ENCODE measurements at regions of chr10 and their contacts with region 1.

Region 1: GRCh38 chr10:96695366-96695765 is 24.9 kb downstream of the PIK3AP1 start:
- DNase-seq: no peak
- H3K4me3 Mint-ChIP-seq: peak overlapping the region; percentile 57
- H3K27ac Mint-ChIP-seq: peak overlapping the region; percentile 83
- H3K4me1 Mint-ChIP-seq: peaks cover 46% of the 10 kb centered on the region
- H3K27me3 Mint-ChIP-seq: no peaks in the 10 kb centered on the region

Region 2: GRCh38 chr10:96440361-96441292 is 254.7 kb before region 1 on chr10:
- intact Hi-C with region 1: no loop called
- DNase-seq: no peak
- H3K4me3 Mint-ChIP-seq: no peak overlapping the region
- H3K27ac Mint-ChIP-seq: no peak overlapping the region
- H3K4me1 Mint-ChIP-seq: no peaks in the 10 kb centered on the region
- H3K27me3 Mint-ChIP-seq: peaks cover 5% of the 10 kb centered on the region

Region 3: GRCh38 chr10:96651998-96652431 is 43.4 kb before region 1 on chr10:
- intact Hi-C with region 1: loop called (anchors 1 kb)
- DNase-seq: no peak
- H3K4me3 Mint-ChIP-seq: peak overlapping the region; percentile 1
- H3K27ac Mint-ChIP-seq: peak overlapping the region; percentile 67
- H3K4me1 Mint-ChIP-seq: peaks cover 48% of the 10 kb centered on the region
- H3K27me3 Mint-ChIP-seq: no peaks in the 10 kb centered on the region

Region 4: DNA sequence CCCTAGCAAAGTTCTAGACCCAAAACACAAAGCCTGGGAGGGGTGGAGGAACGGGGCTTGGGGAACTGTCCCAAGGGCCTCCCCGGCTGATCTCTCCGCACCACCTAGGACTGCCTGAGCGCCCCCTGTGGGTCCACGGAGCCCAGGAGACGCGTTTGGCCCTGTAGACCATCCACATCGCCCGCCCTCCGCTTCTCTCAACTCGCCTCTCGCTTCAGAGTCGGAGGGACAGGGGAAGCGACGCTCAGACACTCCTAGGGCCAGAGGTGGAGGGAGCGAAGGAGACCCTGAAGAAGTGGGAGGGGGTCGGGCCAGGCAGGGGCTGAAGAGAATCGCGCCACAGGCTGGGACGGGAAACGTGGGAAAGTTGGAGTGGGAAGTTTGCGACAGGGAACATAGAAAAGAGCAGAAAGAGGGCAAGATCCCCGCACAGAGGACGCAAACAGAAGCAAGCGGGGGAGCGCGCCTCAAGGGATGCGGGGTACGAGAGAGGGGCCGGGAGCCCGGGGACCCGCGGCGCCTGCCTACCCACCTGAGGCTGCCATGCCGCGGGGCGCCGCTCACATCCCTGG is 24.6 kb after region 1 on chr10:
- intact Hi-C with region 1: loop called (anchors 2 kb)
- DNase-seq: peak; percentile 13
- H3K4me3 Mint-ChIP-seq: peak overlapping the region; percentile 91
- H3K27ac Mint-ChIP-seq: peak overlapping the region; percentile 74
- H3K4me1 Mint-ChIP-seq: peaks cover 30% of the 10 kb centered on the region
- H3K27me3 Mint-ChIP-seq: peaks cover 25% of the 10 kb centered on the region

Region 5: DNA sequence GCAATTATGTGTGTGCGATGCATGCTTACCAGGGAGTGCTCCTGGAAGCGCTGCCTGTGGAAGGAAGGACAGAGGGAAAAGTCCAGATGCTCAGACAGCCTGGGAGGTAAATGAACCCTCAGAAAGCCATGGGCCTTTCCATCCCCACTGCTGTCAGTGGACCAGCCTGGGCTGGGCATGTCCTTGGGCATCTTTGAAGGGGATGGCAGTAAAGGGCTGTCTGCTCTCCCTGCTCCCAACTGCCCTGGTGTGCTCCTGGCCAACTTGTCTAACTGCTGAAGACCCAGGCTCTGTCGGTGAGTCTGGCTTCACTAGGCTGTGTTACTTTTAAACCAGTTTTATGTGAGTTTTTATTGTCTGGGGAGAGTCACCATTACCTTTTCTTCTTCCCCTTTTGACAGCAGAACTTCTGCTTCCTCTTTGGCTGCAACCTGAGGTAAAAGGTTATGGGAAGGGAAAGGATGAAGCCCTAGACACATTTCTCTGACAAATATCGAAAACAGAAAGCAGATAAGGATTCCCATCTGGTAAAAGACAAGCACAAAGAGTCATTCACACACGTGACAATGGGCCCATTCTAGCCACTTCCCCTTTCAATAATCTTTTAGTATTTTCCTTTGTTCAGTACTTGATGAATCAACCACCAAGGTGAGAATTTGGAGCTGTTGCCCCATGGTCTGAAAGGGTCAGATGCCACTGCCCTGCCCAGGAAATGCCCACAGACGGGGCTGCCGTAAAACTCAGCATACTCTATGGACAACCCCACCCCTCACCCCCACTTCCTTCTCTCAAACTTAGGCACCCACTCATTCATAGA is 52.6 kb after region 1 on chr10:
- intact Hi-C with region 1: loop called (anchors 2 kb)
- DNase-seq: peak; percentile 20
- H3K4me3 Mint-ChIP-seq: peak overlapping the region; percentile 26
- H3K27ac Mint-ChIP-seq: peak overlapping the region; percentile 51
- H3K4me1 Mint-ChIP-seq: peaks cover 18% of the 10 kb centered on the region
- H3K27me3 Mint-ChIP-seq: peaks cover 19% of the 10 kb centered on the region

Measured in activated T-helper 2 cell treated with anti-CD3 and anti-CD28 coated beads, Interferon-gamma antibody, Interleukin-2, Interleukin-4, amounts not matched to agents 10 μg/mL and 5 μg/mL and 100 μg/mL, durations not matched to agents 14 hours and 24 hours and 36 hours (primary cell).